Activated CD4-positive, alpha-beta T cell treated with anti-CD3 and anti-CD28 coated beads, Interleukin-2, amount 10 ng/mL, durations not matched to agents 24 days and 14 days (primary cell): ENCODE measurements at regions of chr5 and their contacts with region 1.

Region 1: DNA sequence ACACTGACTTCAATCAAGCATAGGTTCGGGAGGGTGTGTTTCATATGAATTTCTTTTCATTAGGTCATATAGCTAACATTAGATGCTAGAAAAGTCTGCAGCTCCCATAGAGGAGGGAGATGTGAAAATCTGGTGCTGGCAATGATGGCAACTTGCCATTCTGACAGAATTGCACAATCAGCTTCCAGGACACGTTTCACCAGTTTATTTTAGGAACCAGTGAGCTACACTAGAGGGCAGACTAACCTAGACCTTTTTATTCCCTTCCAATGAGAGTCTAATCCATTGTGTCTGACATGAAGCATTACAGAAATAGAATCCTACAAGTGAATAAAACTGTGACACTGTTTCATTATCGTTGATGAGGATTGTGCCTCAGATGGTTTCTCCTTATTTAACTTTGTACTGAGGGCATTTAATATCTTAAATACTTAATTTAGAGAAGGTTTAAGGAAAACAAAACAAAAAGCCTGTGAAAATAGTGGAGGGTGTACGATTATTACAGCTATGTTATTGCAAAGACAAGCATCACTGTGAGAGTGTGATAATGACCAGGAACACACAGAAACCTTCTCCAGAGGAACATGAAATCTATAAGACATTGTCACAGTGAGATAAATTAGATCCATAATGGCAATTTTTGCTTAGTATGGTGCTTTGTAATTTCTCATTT is 363.3 kb upstream of the RPS23 start:
- DNase-seq: peak; percentile 77
- H3K4me3 Mint-ChIP-seq: no peak overlapping the region
- H3K27ac Mint-ChIP-seq: no peak overlapping the region
- H3K4me1 Mint-ChIP-seq: peaks cover 12% of the 10 kb centered on the region
- H3K27me3 Mint-ChIP-seq: peaks cover 6% of the 10 kb centered on the region

Region 2: GRCh38 chr5:82312373-82312856 is 329.1 kb before region 1 on chr5:
- intact Hi-C with region 1: loop called (anchors 5 kb)
- DNase-seq: peak; percentile 85
- H3K4me3 Mint-ChIP-seq: no peak overlapping the region
- H3K27ac Mint-ChIP-seq: no peak overlapping the region
- H3K4me1 Mint-ChIP-seq: peaks cover 2% of the 10 kb centered on the region
- H3K27me3 Mint-ChIP-seq: no peaks in the 10 kb centered on the region

Region 3: GRCh38 chr5:82793808-82794419 is 152.4 kb after region 1 on chr5:
- intact Hi-C with region 1: loop called (anchors 1 kb)
- DNase-seq: peak; percentile 81
- H3K4me3 Mint-ChIP-seq: no peak overlapping the region
- H3K27ac Mint-ChIP-seq: no peak overlapping the region
- H3K4me1 Mint-ChIP-seq: peaks cover 4% of the 10 kb centered on the region
- H3K27me3 Mint-ChIP-seq: peaks cover 10% of the 10 kb centered on the region

Region 4: DNA sequence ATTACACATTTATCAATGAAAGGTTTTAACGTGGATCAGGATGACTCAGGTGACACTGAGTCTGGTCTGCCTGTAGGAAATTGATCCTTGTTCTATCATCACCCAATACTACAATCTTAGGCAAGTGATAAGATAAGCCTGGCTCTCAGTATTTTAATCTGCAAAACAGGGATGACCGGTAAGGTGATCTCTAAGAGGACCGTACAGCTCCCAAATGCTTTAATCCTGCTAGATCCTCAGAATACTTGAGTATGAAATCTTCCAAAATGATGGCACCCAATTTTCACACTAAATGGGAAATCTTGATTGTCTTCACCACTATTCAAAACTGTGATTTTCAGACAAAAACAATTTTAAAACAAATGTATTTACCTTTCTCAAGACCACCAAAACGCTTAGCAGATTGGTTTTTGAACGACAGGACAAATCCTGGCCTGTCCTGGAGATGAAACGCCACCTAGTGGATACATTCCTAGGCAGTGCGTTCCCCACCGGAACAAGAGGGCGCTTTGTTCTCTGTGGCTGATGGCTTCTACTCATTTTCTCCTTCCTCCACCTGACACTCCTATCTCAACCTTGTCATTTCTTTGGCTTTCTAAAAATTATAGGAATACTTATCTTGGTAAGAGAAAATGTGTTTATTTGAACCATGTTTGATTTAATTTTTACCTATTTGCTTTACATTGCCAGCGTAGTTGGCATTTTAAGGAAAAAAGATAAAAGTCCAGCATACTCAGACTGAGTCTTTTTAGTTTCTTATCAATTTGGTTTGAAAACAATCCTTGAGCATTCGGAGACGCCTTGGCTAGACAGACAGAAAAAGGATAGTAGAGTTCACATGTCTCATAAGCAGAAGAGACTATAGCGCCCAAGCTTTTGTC is 788.9 kb after region 1 on chr5:
- intact Hi-C with region 1: loop called (anchors 2 kb)
- DNase-seq: peak; percentile 87
- H3K4me3 Mint-ChIP-seq: no peak overlapping the region
- H3K27ac Mint-ChIP-seq: no peak overlapping the region
- H3K4me1 Mint-ChIP-seq: no peaks in the 10 kb centered on the region
- H3K27me3 Mint-ChIP-seq: peaks cover 3% of the 10 kb centered on the region

Region 5: GRCh38 chr5:83564069-83564749 is 922.7 kb after region 1 on chr5:
- intact Hi-C with region 1: loop called (anchors 5 kb)
- DNase-seq: no peak
- H3K4me3 Mint-ChIP-seq: no peak overlapping the region
- H3K27ac Mint-ChIP-seq: no peak overlapping the region
- H3K4me1 Mint-ChIP-seq: no peaks in the 10 kb centered on the region
- H3K27me3 Mint-ChIP-seq: peaks cover 32% of the 10 kb centered on the region